ENCODE measurements at regions of chr10 and their contacts with region 1.

Region 1: GRCh38 chr10:8278099-8278498 is 223.6 kb downstream of the GATA3 start:
- DNase-seq: no peak

Region 2: GRCh38 chr10:8221451-8221850 is 56.6 kb before region 1 on chr10:
- intact Hi-C with region 1: loop called in 1 of 2 experiments (anchors 2 kb)
- DNase-seq: no peak

Region 3: DNA sequence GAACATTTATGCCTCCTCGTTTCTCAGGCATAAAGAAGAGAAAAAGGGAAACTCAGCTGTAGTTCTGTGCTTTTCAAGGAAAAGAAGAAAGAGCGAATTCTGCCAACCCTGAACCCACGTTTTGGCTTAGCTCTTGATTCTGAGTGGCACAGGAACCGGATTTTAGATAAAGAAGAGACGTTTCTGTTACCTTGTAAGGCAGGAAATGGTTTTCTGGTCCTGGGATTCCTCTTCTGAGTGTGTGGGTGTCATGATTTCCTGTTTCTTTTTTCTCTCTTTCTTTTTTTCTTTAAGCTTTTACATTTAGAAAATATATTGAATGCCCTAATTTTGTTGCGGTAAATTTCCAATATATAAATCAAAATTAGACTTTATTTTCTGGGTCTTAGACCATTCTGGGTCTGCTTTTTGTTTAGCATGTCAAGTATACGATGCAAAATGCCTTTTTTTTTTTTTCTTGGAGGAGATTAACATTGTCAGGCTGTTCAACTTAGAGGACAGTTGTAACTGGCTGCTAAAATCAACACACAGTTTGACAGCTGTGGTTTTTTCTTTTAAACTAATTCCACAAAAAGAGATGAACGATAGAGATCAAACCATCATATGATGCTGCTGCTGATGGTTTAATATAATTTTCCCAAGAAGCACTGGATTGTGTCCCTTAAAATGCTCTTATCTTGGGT is 32.8 kb before region 1 on chr10:
- intact Hi-C with region 1: no loop called
- DNase-seq: no peak

Measured in posterior vena cava (tissue), 2 donors.